ENCODE measurements at regions of chr10 and their contacts with region 1.

Region 1: GRCh38 chr10:59865101-59865500 is 41.3 kb downstream of the CCDC6 start:
- DNase-seq: peak; percentile 29
- CTCF ChIP-seq: peak; percentile 61

Region 2: GRCh38 chr10:59926086-59926485 is 61.0 kb after region 1 on chr10:
- in situ Hi-C with region 1: no loop called
- DNase-seq: no peak
- CTCF ChIP-seq: no peak

Region 3: GRCh38 chr10:60032723-60033122 is 167.6 kb after region 1 on chr10:
- in situ Hi-C with region 1: loop called (anchors 25 kb)
- DNase-seq: peak; percentile 61
- CTCF ChIP-seq: peak; percentile 71